Gastrocnemius medialis (tissue), 4 donors: ENCODE measurements at regions of chr13 and their contacts with region 1.

Region 1: GRCh38 chr13:40344270-40345148 is 321.9 kb downstream of the FOXO1 start:
- DNase-seq: peak; percentile 87 to 88
- ATAC-seq: peak; percentile 77 to 83
- H3K4me3 ChIP-seq: no peak overlapping the region
- H3K27ac ChIP-seq: peak overlapping the region; percentile 84 to 94 (median 88)
- H3K4me1 ChIP-seq: peaks cover 48 to 52% of the 10 kb centered on the region in 2 donors
- H3K27me3 ChIP-seq: no peaks in the 10 kb centered on the region
- CTCF ChIP-seq: no peak
- POLR2A ChIP-seq: peak; percentile 57 to 69

Region 2: GRCh38 chr13:40221460-40222201 is 122.9 kb before region 1 on chr13:
- in situ Hi-C with region 1: loop called in 1 of 4 experiments (anchors 10 kb)
- intact Hi-C with region 1: no loop called
- DNase-seq: peak; percentile 55 to 68
- ATAC-seq: peak; percentile 96 to 98
- H3K4me3 ChIP-seq: no peak overlapping the region
- H3K27ac ChIP-seq: peak overlapping the region; percentile 76 to 81 (median 78)
- H3K4me1 ChIP-seq: peaks cover 13 to 26% of the 10 kb centered on the region in 2 donors
- H3K27me3 ChIP-seq: no peaks in the 10 kb centered on the region
- CTCF ChIP-seq: no peak
- POLR2A ChIP-seq: no peak

Region 3: GRCh38 chr13:40230833-40231266 is 113.7 kb before region 1 on chr13:
- in situ Hi-C with region 1: loop called in 2 of 4 experiments (anchors 10 kb)
- intact Hi-C with region 1: loop called (anchors 1 kb)
- DNase-seq: no peak
- ATAC-seq: no peak
- H3K4me3 ChIP-seq: no peak overlapping the region
- H3K27ac ChIP-seq: peak overlapping the region; percentile 97 to 99 (median 98)
- H3K4me1 ChIP-seq: peaks cover 42 to 55% of the 10 kb centered on the region in 2 donors
- H3K27me3 ChIP-seq: no peaks in the 10 kb centered on the region
- CTCF ChIP-seq: no peak
- POLR2A ChIP-seq: no peak

Region 4: DNA sequence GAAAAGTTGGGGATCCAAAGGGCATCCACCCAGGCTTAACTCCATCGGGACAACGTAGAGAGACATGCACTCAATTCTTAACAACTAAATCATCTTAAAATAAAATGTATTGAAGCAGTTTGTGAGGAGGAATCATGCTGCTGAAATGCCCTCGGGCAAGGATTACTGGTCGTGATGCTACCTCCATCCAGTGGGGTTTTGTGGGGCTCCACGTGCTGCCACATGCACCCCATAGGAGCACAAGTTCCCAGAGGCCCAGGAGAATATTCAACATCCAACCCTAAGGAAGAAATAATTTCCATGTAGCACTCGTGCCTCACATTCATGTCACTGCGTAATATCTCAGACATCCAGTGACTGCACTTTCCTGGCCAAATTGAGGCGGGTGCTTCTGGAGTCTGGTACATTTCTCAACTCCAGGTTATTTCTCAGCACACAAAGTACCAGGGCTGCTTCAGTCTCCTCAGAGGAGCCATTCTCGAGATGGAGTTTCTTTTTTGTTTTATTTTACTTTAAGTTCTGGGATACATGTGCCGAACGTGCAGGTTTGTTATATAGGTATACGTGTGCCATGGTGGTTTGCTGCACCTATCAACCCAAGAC is 107.8 kb before region 1 on chr13:
- in situ Hi-C with region 1: loop called in 1 of 4 experiments (anchors 10 kb)
- intact Hi-C with region 1: loop called (anchors 1 kb)
- DNase-seq: peak; percentile 93 to 95
- ATAC-seq: peak; percentile 64 to 75
- H3K4me3 ChIP-seq: peak overlapping the region in 2 of 4 donors; percentile 21 to 26
- H3K27ac ChIP-seq: peak overlapping the region; percentile 97 to 99 (median 98)
- H3K4me1 ChIP-seq: peaks cover 50 to 56% of the 10 kb centered on the region in 2 donors
- H3K27me3 ChIP-seq: no peaks in the 10 kb centered on the region
- CTCF ChIP-seq: peak in 1 of 5 experiments; percentile 12
- POLR2A ChIP-seq: peak; percentile 73 to 86

Region 5: GRCh38 chr13:40283666-40284065 is 60.8 kb before region 1 on chr13:
- in situ Hi-C with region 1: no loop called
- intact Hi-C with region 1: no loop called
- DNase-seq: no peak
- ATAC-seq: no peak
- H3K4me3 ChIP-seq: no peak overlapping the region
- H3K27ac ChIP-seq: no peak overlapping the region
- H3K4me1 ChIP-seq: no peaks in the 10 kb centered on the region
- H3K27me3 ChIP-seq: no peaks in the 10 kb centered on the region
- CTCF ChIP-seq: no peak
- POLR2A ChIP-seq: no peak

Region 6: GRCh38 chr13:40589285-40590109 is 245.0 kb after region 1 on chr13:
- in situ Hi-C with region 1: no loop called
- intact Hi-C with region 1: loop called (anchors 2 kb)
- DNase-seq: peak; percentile 74 to 79
- ATAC-seq: peak; percentile 86
- H3K4me3 ChIP-seq: peak overlapping the region in 3 of 4 donors; percentile 20 to 22 (median 21)
- H3K27ac ChIP-seq: peak overlapping the region; percentile 83 to 89 (median 86)
- H3K4me1 ChIP-seq: peaks cover 93 to 96% of the 10 kb centered on the region in 2 donors
- H3K27me3 ChIP-seq: no peaks in the 10 kb centered on the region
- CTCF ChIP-seq: no peak
- POLR2A ChIP-seq: peak; percentile 40 to 71

Region 7: DNA sequence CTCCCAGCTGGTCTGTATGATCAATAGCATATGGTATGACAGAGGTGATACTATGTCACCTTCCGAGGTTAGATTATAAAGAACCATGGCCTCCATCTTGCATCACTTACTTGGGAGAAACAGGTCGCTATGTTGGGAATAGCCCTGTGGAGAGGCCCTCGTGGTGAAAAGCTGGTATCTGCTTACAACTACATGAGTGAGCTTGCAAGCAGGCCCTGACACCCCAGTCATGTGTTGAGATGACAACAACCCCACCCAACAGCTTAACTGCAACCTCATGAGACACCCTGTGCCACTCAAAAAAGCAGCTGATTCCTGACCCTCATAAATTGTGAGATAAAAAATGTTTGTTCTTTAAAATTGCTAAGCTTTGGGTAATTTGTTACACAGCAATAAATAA is 900.0 kb after region 1 on chr13:
- in situ Hi-C with region 1: no loop called
- intact Hi-C with region 1: loop called (anchors 5 kb)
- DNase-seq: peak; percentile 79 to 91
- ATAC-seq: peak; percentile 81 to 89
- H3K4me3 ChIP-seq: no peak overlapping the region
- H3K27ac ChIP-seq: peak overlapping the region; percentile 77 to 82 (median 79)
- H3K4me1 ChIP-seq: peaks cover 44 to 58% of the 10 kb centered on the region in 2 donors
- H3K27me3 ChIP-seq: no peaks in the 10 kb centered on the region
- CTCF ChIP-seq: no peak
- POLR2A ChIP-seq: no peak